ENCODE measurements at regions of chr2 and their contacts with region 1.

Region 1: GRCh38 chr2:219029829-219030165 is 11.5 kb downstream of the CFAP65 start:
- DNase-seq: peak; percentile 50
- ATAC-seq: peak; percentile 95
- H3K4me3 ChIP-seq: no peak overlapping the region
- H3K27ac ChIP-seq: no peak overlapping the region
- H3K4me1 ChIP-seq: no peaks in the 10 kb centered on the region
- H3K27me3 ChIP-seq: 0 out of 2 replicates have a peak, but pooled peaks cover 2% of the 10 kb centered on the region
- CTCF ChIP-seq: peak; percentile 98

Region 2: DNA sequence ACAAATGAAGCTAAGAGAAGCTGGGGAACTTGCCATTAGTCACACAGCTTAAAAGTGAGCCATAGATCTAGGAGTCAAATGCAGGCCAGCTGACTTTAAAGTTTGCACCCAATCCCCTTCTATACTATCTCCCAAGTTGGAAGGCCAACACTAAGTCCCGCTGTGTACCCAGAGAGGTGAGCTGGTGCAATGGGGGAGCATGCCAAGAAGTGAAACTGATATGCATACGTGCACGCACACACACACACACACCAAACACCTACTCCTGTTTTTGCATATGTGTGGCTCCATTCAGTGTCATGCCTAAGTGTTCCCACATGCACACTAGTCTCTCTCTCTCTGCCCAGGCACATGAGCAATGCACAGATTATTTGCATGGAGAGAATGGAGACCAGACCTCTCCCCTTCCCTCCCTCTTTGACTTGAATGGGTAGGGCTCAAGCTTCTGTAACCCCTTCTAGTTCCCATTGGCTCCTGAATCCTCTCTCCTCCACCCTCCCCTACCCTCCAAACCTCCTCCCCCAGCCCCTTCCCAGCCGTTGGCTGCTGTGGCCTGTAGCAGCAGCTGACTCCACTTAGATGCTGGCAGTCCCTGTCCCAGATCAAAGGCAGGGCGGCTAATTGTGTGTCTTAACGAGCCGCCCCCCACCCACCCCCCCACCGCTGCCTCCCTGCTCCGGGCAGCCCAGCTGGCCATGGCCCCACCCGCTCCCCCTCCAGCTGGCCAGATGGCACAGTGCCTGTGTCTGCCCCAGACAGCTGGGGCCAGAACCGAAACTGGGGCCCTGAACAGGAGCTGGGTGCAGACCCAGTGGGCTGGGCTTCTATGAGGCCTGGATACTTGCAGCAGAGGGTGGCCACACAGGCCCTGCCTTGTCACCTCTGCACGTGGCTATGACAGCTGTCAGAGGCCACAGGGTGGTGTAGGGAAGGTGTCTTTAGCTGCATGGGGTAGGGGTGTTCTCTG is 143.5 kb before region 1 on chr2:
- CTCF ChIA-PET with region 1: interaction called, 14 read pairs
- POLR2A ChIA-PET with region 1: no interaction called
- in situ Hi-C with region 1: no loop called
- intact Hi-C with region 1: no loop called
- DNase-seq: no peak
- ATAC-seq: no peak
- H3K4me3 ChIP-seq: no peak overlapping the region
- H3K27ac ChIP-seq: no peak overlapping the region
- H3K4me1 ChIP-seq: peaks cover 8% of the 10 kb centered on the region
- H3K27me3 ChIP-seq: no peaks in the 10 kb centered on the region
- CTCF ChIP-seq: no peak

Region 3: GRCh38 chr2:219010162-219010756 is 19.5 kb before region 1 on chr2:
- CTCF ChIA-PET with region 1: interaction called, 12 read pairs
- POLR2A ChIA-PET with region 1: no interaction called
- in situ Hi-C with region 1: no loop called
- intact Hi-C with region 1: no loop called
- DNase-seq: no peak
- ATAC-seq: peak; percentile 93
- H3K4me3 ChIP-seq: no peak overlapping the region
- H3K27ac ChIP-seq: no peak overlapping the region
- H3K4me1 ChIP-seq: no peaks in the 10 kb centered on the region
- H3K27me3 ChIP-seq: no peaks in the 10 kb centered on the region
- CTCF ChIP-seq: peak; percentile 84

Region 4: DNA sequence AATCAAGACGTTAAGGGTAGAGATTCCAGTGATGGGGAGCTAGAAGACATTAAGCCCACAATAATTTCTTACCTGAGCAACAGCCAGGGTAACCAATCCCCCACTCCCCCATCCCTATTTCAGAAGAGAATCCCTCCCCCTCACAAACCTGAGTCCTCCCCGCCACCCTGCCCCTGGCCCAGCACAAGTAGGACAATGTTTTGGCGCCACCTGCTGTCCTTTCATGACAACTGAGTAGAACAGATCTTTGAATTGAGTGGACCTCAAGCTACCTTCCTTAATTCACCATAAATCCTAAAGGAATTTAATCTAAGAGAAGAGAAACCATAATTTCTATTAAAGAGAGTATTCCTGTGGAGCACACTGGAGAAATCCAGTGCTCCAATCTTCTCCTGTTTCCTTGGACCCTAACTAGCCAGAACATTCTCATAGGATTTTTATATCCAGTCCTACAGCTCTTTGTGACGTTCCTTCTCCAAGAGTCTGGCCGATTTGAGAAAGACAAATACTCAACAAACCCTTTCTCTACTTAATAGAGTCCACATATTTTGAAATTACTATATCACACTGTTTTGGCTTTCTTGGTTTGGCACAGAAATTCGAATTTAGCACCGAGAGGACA is 89.7 kb after region 1 on chr2:
- CTCF ChIA-PET with region 1: interaction called, 18 read pairs
- POLR2A ChIA-PET with region 1: no interaction called
- in situ Hi-C with region 1: no loop called
- intact Hi-C with region 1: no loop called
- DNase-seq: no peak
- ATAC-seq: peak; percentile 91
- H3K4me3 ChIP-seq: no peak overlapping the region
- H3K27ac ChIP-seq: no peak overlapping the region
- H3K4me1 ChIP-seq: no peaks in the 10 kb centered on the region
- H3K27me3 ChIP-seq: no peaks in the 10 kb centered on the region
- CTCF ChIP-seq: peak; percentile 87

Region 5: GRCh38 chr2:219206442-219207253 is 176.9 kb after region 1 on chr2 and contains the start of gene ZFAND2B:
- CTCF ChIA-PET with region 1: interaction called, 10 read pairs
- POLR2A ChIA-PET with region 1: no interaction called
- in situ Hi-C with region 1: no loop called
- intact Hi-C with region 1: no loop called
- DNase-seq: peak; percentile 57
- ATAC-seq: peak; percentile 98
- H3K4me3 ChIP-seq: peak within 1 kb of the TSS; percentile 55 to 93
- H3K27ac ChIP-seq: peak within 1 kb of the TSS; percentile 86
- H3K4me1 ChIP-seq: peaks cover 16% of the 10 kb centered on the region
- H3K27me3 ChIP-seq: no peaks in the 10 kb centered on the region
- CTCF ChIP-seq: no peak
- total RNA-seq, gene ZFAND2B: 43.2 TPM

Region 6: DNA sequence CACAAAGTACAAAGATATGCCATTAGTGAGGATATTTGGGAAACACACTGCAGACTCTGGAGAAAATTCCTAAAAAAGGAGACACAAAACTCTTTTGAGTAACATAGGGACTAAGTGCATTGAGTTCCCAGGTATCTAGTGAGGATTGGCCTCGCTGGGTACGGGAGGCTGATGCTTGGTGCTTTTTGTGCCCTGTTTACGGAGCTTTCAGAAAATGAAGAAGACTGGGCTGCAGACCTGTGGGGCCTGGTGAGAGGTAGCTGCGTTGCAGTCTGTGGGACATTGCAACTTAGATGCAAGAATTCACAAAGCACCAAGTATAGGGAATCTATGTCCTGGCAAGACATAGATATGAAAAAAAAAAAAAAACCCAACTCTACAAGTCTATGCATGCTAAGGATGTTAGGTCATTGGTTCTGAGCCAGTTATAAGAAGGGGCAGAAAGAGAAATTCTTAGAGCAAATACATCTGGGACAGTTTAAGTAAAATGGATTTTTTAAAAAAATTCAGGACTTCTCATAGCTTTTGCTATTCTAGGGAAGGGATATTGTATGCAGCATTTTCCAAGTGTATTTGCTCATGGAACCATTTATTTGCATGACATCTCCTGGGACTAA is 753.7 kb after region 1 on chr2:
- CTCF ChIA-PET with region 1: no interaction called
- POLR2A ChIA-PET with region 1: no interaction called
- in situ Hi-C with region 1: no loop called
- intact Hi-C with region 1: no loop called
- DNase-seq: no peak
- ATAC-seq: no peak
- H3K4me3 ChIP-seq: no peak overlapping the region
- H3K27ac ChIP-seq: no peak overlapping the region
- H3K4me1 ChIP-seq: no peaks in the 10 kb centered on the region
- H3K27me3 ChIP-seq: no peaks in the 10 kb centered on the region
- CTCF ChIP-seq: no peak

Region 7: DNA sequence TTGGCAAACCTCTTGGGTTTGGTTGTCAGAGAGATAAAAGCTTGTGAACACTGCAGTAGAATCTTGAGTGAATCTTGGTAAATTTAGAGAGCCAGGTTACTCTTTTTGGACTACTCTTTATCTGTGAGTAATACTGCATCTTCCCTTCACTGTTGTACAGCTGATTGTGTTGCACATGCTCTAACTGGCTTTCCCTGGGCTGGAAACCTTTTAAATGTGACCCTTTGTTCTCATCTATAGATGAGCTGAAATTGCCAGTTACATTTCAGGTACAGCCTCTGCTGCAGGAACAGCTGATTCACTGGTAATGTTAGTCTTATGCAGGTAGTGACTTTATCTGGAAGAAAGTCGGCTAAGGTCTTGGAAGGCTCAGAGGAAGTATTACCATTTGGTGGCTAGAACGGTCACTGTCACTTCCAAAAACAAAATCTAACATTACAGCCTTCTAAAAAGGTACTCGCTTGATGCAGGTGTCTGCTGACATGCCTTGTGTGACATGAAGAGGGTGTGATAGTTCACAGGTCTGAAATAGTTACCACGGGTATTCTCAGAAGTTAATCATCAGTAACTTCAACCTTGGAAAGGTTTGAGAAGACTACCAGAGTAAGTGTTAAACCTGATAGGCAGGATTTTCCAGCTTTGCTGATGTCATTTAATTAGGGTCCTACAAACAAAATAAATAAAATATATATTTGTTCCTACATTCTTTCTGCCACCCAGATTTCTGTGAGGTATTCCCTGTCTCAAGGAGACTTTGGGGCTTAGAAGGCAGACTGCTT is 1448.7 kb after region 1 on chr2:
- CTCF ChIA-PET with region 1: no interaction called
- POLR2A ChIA-PET with region 1: no interaction called
- in situ Hi-C with region 1: no loop called
- intact Hi-C with region 1: no loop called
- DNase-seq: no peak
- ATAC-seq: no peak
- H3K4me3 ChIP-seq: no peak overlapping the region
- H3K27ac ChIP-seq: no peak overlapping the region
- H3K4me1 ChIP-seq: no peaks in the 10 kb centered on the region
- H3K27me3 ChIP-seq: no peaks in the 10 kb centered on the region
- CTCF ChIP-seq: no peak

Measured in Panc1 (cell line).